ENCODE measurements at regions of chr10 and their contacts with region 1.

Region 1: GRCh38 chr10:102407437-102408130 is 11.0 kb downstream of the PSD start:
- DNase-seq: no peak

Region 2: GRCh38 chr10:102384053-102384452 is 23.5 kb before region 1 on chr10:
- intact Hi-C with region 1: loop called (anchors 2 kb)
- DNase-seq: no peak

Region 3: GRCh38 chr10:102704915-102705314 is 297.3 kb after region 1 on chr10:
- intact Hi-C with region 1: no loop called
- DNase-seq: no peak

Measured in cardiac septum (tissue), 1 donor.